K562 (cell line): ENCODE measurements at regions of chr15 and their contacts with region 1.

Region 1: DNA sequence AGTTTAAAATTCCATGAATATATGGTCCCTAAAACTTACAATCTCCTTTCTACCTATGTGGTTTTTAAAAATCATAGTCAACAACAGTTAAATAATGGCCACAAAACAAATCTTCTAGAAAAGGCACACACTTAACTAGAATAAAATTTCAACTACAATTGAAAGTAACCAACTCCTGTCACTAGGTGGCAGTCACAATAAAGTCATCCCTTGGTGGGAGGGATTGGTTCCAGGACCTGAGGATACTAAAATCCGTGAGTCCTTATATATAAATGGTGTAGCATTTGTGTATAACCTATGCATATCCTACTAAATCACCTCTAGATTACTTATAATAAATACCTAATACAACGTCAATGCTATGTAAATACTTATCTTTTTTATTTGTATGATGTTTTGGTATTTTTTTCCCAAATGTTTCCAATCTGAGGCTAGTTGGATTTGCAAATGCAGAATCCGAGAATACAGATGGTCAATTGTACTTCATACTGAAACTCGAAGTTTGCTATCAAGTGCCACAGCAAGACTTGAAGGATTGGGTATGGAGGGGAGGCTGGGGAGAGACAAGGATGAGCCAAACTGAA is 172.6 kb downstream of the FMN1 start:
- DNase-seq: peak; percentile 39 to 54 (median 50)
- ATAC-seq: peak; percentile 73
- H3K4me3 ChIP-seq: no peak overlapping the region
- H3K27ac ChIP-seq: no peak overlapping the region
- H3K4me1 ChIP-seq: no peaks in the 10 kb centered on the region; a peak in 2 of 5 replicates
- H3K27me3 ChIP-seq: peaks cover 0 to 7% of the 10 kb centered on the region in 2 experiments; a peak in 1 of 5 replicates
- CTCF ChIP-seq: peak; percentile 34 to 63 (median 47); a peak in 5 of 6 replicates
- EP300 ChIP-seq: no peak
- POLR2A ChIP-seq: no peak
- RAD21 ChIP-seq: peak in 1 of 2 experiments; percentile 37; a peak in 2 of 4 replicates

Region 2: GRCh38 chr15:33074942-33075341 is 53.0 kb after region 1 on chr15:
- CTCF ChIA-PET with region 1: no interaction called
- POLR2A ChIA-PET with region 1: no interaction called
- in situ Hi-C with region 1: no loop called
- intact Hi-C with region 1: loop called (anchors 10 kb)
- DNase-seq: no peak
- ATAC-seq: no peak; the same call in 2 of the 3 replicates
- H3K4me3 ChIP-seq: no peak overlapping the region
- H3K27ac ChIP-seq: no peak overlapping the region
- H3K4me1 ChIP-seq: no peaks in the 10 kb centered on the region
- H3K27me3 ChIP-seq: no peaks in the 10 kb centered on the region; a peak in 1 of 5 replicates
- CTCF ChIP-seq: 0 out of 6 replicates have a peak, but pooled peaks of 1 of the 3 experiments have one; percentile 15
- EP300 ChIP-seq: no peak
- POLR2A ChIP-seq: no peak
- RAD21 ChIP-seq: no peak

Region 3: DNA sequence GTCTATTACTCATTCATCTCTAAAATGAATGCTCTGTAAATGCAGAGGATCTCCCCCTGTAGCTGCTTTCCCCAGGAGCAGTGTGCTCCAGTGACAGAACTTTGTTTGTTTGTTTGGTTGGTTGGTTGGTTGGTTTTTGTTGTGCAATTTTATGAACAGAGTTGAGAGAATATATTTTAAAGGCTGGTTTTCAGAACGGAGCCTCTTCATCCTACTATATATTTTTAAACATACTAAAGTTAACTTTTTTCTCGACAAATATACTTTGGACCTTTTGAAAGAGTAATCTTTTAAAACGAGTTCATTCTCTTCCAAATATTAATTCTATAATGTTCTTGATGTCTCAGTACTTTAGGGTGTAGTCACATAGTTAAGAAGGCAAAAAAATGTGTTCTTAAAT is 309.0 kb after region 1 on chr15:
- CTCF ChIA-PET with region 1: no interaction called
- POLR2A ChIA-PET with region 1: no interaction called
- in situ Hi-C with region 1: no loop called
- intact Hi-C with region 1: no loop called
- DNase-seq: no peak
- ATAC-seq: no peak
- H3K4me3 ChIP-seq: no peak overlapping the region
- H3K27ac ChIP-seq: no peak overlapping the region
- H3K4me1 ChIP-seq: no peaks in the 10 kb centered on the region
- H3K27me3 ChIP-seq: no peaks in the 10 kb centered on the region
- CTCF ChIP-seq: no peak
- EP300 ChIP-seq: no peak
- POLR2A ChIP-seq: no peak
- RAD21 ChIP-seq: no peak